Activated T-helper 2 cell treated with anti-CD3 and anti-CD28 coated beads, Interferon-gamma antibody, Interleukin-2, Interleukin-4, amounts not matched to agents 10 μg/mL and 5 μg/mL and 100 μg/mL, durations not matched to agents 14 hours and 24 hours and 36 hours (primary cell): ENCODE measurements at regions of chr17 and their contacts with region 1.

Region 1: GRCh38 chr17:63697341-63698286 is 2.3 kb downstream of the LIMD2 start:
- DNase-seq: peak; percentile 77
- H3K4me3 Mint-ChIP-seq: peak overlapping the region; percentile 93
- H3K27ac Mint-ChIP-seq: peak overlapping the region; percentile 90
- H3K4me1 Mint-ChIP-seq: peaks cover 46% of the 10 kb centered on the region
- H3K27me3 Mint-ChIP-seq: no peaks in the 10 kb centered on the region

Region 2: GRCh38 chr17:63425482-63425881 is 272.1 kb before region 1 on chr17:
- intact Hi-C with region 1: loop called (anchors 5 kb)
- DNase-seq: peak; percentile 47
- H3K4me3 Mint-ChIP-seq: no peak overlapping the region
- H3K27ac Mint-ChIP-seq: no peak overlapping the region
- H3K4me1 Mint-ChIP-seq: peaks cover 21% of the 10 kb centered on the region
- H3K27me3 Mint-ChIP-seq: peaks cover 15% of the 10 kb centered on the region

Region 3: DNA sequence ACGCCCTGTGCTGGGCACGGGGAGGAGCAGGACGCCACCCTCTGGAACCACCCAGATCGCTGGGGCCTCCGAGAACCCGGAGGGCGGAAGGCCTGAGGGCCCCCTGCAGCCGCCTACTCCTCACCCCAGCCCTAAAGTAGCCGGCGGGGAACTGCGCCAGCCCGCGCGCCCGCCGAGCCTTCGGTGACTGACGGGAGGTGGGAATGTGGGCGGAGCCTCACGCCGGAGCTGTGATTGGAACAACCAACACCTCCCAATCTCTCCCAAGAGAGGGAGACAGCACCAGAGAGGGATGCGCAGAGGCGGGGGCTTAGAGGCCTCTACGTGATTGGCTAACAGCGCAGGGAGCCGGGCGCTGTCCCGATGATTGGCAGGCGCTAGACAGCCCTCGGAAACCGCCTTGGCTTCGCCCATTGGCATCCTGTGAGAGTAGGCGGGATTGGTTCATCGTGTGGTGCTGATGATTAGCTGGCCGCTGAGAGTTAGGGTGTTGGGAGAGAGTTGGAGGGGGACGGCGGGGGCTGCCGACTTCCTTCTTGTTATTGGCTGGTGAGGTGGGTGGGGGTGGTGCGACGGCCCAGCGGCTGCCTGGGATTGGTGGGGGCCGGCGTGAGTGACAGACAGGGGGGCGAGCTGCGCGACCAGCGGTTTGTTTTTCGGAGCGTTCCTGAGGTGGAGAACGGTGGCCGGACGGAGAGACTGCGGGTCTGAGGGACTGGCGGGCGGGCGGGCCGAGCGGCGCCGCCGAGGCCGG is 75.7 kb before region 1 on chr17 and contains the start of gene MAP3K3:
- intact Hi-C with region 1: loop called (anchors 1 kb)
- DNase-seq: peak; percentile 98
- H3K4me3 Mint-ChIP-seq: peak within 1 kb of the TSS; percentile 99
- H3K27ac Mint-ChIP-seq: peak within 1 kb of the TSS; percentile 92
- H3K4me1 Mint-ChIP-seq: peaks cover 31% of the 10 kb centered on the region
- H3K27me3 Mint-ChIP-seq: peaks cover 13% of the 10 kb centered on the region
- total RNA-seq, gene MAP3K3: 27.9 and 28.7 TPM in 2 replicates

Region 4: GRCh38 chr17:63741221-63742049 is 43.8 kb after region 1 on chr17 and contains the start of gene STRADA:
- intact Hi-C with region 1: loop called (anchors 1 kb)
- DNase-seq: peak; percentile 99
- H3K4me3 Mint-ChIP-seq: peak within 1 kb of the TSS; percentile 98
- H3K27ac Mint-ChIP-seq: peak within 1 kb of the TSS; percentile 96
- H3K4me1 Mint-ChIP-seq: peaks cover 20% of the 10 kb centered on the region
- H3K27me3 Mint-ChIP-seq: no peaks in the 10 kb centered on the region
- total RNA-seq, gene STRADA: 54.0 and 57.4 TPM in 2 replicates

Region 5: GRCh38 chr17:63773381-63774140 is 75.9 kb after region 1 on chr17 and contains the start of gene CCDC47:
- intact Hi-C with region 1: loop called (anchors 1 kb)
- DNase-seq: peak; percentile 99
- H3K4me3 Mint-ChIP-seq: peak within 1 kb of the TSS; percentile 92
- H3K27ac Mint-ChIP-seq: peak within 1 kb of the TSS; percentile 99
- H3K4me1 Mint-ChIP-seq: peaks cover 36% of the 10 kb centered on the region
- H3K27me3 Mint-ChIP-seq: no peaks in the 10 kb centered on the region
- total RNA-seq, gene CCDC47: 70.0 and 73.7 TPM in 2 replicates

Region 6: GRCh38 chr17:63827002-63827771 is 129.6 kb after region 1 on chr17 and contains the starts of genes FTSJ3 and PSMC5:
- intact Hi-C with region 1: loop called (anchors 2 kb)
- DNase-seq: peak; percentile 94
- H3K4me3 Mint-ChIP-seq: peak within 1 kb of the TSS; percentile 94
- H3K27ac Mint-ChIP-seq: peak within 1 kb of the TSS; percentile 99
- H3K4me1 Mint-ChIP-seq: peaks cover 56% of the 10 kb centered on the region
- H3K27me3 Mint-ChIP-seq: no peaks in the 10 kb centered on the region
- total RNA-seq, gene FTSJ3: 75.0 and 80.7 TPM in 2 replicates
- total RNA-seq, gene PSMC5: 185 and 204 TPM in 2 replicates